B cell (primary cell): ENCODE measurements at regions of chr15 and their contacts with region 1.

Region 1: DNA sequence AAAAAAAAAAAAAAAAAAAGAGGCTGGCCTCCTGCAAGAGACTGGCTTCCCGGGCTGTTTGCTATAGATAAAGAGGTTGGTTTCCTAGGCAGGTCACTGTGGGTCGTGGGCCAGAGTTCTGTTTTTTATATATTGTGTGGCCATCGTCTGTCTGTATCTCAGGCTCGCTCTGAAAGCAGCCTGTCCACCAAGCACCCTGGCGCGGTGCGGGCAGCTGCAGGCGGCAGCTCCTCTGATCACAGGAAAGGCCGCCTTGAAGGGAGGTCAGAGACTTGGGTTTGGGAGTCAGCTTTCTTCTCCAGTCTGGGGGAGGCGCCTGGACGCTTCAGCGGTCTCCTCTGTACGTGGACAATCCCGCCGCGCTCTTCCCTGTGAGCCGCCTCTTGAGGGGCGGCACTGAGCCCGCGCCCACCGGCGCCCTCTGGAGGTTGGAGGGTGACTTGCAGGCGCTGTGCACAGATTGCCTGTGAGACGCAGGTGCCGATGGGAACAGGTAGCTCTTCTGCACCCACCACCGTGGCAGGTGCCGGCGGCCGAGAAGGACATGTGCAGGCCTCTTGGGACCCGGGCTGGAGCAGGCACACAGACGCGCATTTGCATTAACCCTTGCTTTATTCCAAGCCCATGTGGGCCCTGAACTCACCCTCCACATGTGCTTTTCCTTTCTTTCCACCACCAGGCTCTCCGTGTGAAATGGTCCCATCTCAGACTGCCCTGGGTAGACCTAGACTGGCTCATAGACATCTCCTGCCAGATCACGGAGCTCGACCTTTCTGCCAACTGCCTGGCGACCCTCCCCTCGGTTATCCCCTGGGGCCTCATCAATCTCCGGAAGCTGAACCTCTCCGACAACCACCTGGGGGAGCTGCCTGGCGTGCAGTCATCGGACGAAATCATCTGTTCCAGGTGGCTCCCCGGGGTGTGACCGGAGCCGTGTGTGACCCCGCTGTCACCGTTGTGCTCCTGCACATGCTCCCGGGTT is 89.3 kb downstream of the LRRK1 start:
- DNase-seq: peak; percentile 91
- ATAC-seq: peak; percentile 95
- H3K4me3 ChIP-seq: peak overlapping the region; percentile 16 to 78 (median 59)
- H3K4me3 Mint-ChIP-seq: peak overlapping the region; percentile 92
- H3K27ac ChIP-seq: no peak overlapping the region
- H3K27ac Mint-ChIP-seq: peak overlapping the region; percentile 42
- H3K4me1 ChIP-seq: peaks cover 10 to 20% of the 10 kb centered on the region in 2 donors
- H3K4me1 Mint-ChIP-seq: peaks cover 20% of the 10 kb centered on the region
- H3K27me3 ChIP-seq: no peaks in the 10 kb centered on the region
- H3K27me3 Mint-ChIP-seq: no peaks in the 10 kb centered on the region
- CTCF ChIP-seq: peak; percentile 96

Region 2: DNA sequence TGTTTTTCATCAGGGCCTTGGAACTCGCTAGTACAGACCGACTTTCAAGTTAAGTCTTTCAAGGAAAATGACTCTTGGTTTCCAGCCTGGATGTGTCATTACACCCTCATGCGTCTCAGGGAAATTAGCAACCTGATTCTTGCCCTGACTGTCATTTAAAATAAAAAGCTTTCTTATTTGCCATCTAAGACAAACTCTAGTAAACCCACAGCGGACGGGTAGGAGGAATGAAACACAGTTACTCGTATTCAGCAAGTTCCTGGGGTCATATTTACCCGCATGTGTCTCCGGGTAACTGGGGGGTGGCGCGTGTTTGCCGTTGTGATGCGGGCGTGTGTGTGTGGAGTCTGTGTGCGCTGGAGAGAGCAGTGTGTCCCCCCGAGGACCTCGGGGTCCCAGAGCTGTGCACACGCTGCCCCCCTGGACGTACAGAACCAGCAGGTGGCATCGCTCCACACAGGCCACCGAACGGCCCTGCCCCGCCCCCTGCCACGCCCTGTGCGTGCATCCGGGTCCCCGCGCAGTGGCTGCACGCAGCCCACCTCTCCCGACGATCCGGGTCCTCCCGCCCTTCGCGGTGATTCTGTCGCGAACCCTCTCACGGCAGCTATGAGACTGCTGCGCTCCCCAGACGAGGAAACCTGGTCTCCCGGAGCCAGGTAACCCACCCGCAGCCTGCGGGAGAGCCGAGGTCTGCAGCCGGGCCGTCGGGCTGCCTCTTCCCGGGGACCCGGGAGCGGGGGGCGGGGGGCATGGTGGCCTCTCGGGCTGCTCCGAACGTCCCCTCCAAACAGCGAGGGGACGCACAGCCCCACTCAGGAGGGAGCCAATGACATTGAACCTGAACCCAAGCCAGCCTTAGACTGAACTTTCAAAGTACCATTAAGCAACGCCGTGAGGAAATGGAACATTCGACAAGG is 158.9 kb before region 1 on chr15:
- CTCF ChIA-PET with region 1: interaction called, 4 read pairs
- POLR2A ChIA-PET with region 1: no interaction called
- intact Hi-C with region 1: loop called (anchors 1 kb)
- DNase-seq: peak; percentile 73
- ATAC-seq: peak; percentile 86
- H3K4me3 ChIP-seq: peak overlapping the region in 4 of 5 experiments; percentile 47 to 66 (median 58)
- H3K4me3 Mint-ChIP-seq: peak overlapping the region; percentile 87
- H3K27ac ChIP-seq: no peak overlapping the region
- H3K27ac Mint-ChIP-seq: peak overlapping the region; percentile 56
- H3K4me1 ChIP-seq: peaks cover 2 to 12% of the 10 kb centered on the region in 2 donors
- H3K4me1 Mint-ChIP-seq: peaks cover 8% of the 10 kb centered on the region
- H3K27me3 ChIP-seq: peaks cover 0 to 10% (median 1%) of the 10 kb centered on the region in 4 experiments
- H3K27me3 Mint-ChIP-seq: peaks cover 16% of the 10 kb centered on the region
- CTCF ChIP-seq: peak; percentile 31

Region 3: GRCh38 chr15:100929641-100930042 is 78.8 kb before region 1 on chr15:
- CTCF ChIA-PET with region 1: interaction called, 807 read pairs
- POLR2A ChIA-PET with region 1: no interaction called
- intact Hi-C with region 1: no loop called
- DNase-seq: no peak
- ATAC-seq: no peak
- H3K4me3 ChIP-seq: no peak overlapping the region
- H3K4me3 Mint-ChIP-seq: peak overlapping the region; percentile 55
- H3K27ac ChIP-seq: no peak overlapping the region
- H3K27ac Mint-ChIP-seq: peak overlapping the region; percentile 37
- H3K4me1 ChIP-seq: peaks cover 56 to 73% of the 10 kb centered on the region in 2 donors
- H3K4me1 Mint-ChIP-seq: peaks cover 74% of the 10 kb centered on the region
- H3K27me3 ChIP-seq: no peaks in the 10 kb centered on the region
- H3K27me3 Mint-ChIP-seq: no peaks in the 10 kb centered on the region
- CTCF ChIP-seq: no peak

Region 4: GRCh38 chr15:100947760-100948429 is 60.6 kb before region 1 on chr15:
- CTCF ChIA-PET with region 1: interaction called, 30 read pairs
- POLR2A ChIA-PET with region 1: no interaction called
- intact Hi-C with region 1: no loop called
- DNase-seq: no peak
- ATAC-seq: no peak
- H3K4me3 ChIP-seq: peak overlapping the region in 3 of 5 experiments; percentile 11 to 35 (median 33)
- H3K4me3 Mint-ChIP-seq: peak overlapping the region; percentile 77
- H3K27ac ChIP-seq: no peak overlapping the region
- H3K27ac Mint-ChIP-seq: peak overlapping the region; percentile 67
- H3K4me1 ChIP-seq: peaks cover 5 to 16% of the 10 kb centered on the region in 2 donors
- H3K4me1 Mint-ChIP-seq: peaks cover 49% of the 10 kb centered on the region
- H3K27me3 ChIP-seq: no peaks in the 10 kb centered on the region
- H3K27me3 Mint-ChIP-seq: no peaks in the 10 kb centered on the region
- CTCF ChIP-seq: no peak

Region 5: GRCh38 chr15:100981086-100981485 is 27.4 kb before region 1 on chr15:
- CTCF ChIA-PET with region 1: interaction called, 14 read pairs
- POLR2A ChIA-PET with region 1: no interaction called
- intact Hi-C with region 1: no loop called
- DNase-seq: peak; percentile 31
- ATAC-seq: peak; percentile 43
- H3K4me3 ChIP-seq: no peak overlapping the region
- H3K4me3 Mint-ChIP-seq: no peak overlapping the region
- H3K27ac ChIP-seq: no peak overlapping the region
- H3K27ac Mint-ChIP-seq: peak overlapping the region; percentile 43
- H3K4me1 ChIP-seq: peaks cover 0 to 7% of the 10 kb centered on the region in 2 donors
- H3K4me1 Mint-ChIP-seq: peaks cover 16% of the 10 kb centered on the region
- H3K27me3 ChIP-seq: no peaks in the 10 kb centered on the region
- H3K27me3 Mint-ChIP-seq: no peaks in the 10 kb centered on the region
- CTCF ChIP-seq: no peak

Region 6: GRCh38 chr15:101033801-101034200 is 25.4 kb after region 1 on chr15:
- CTCF ChIA-PET with region 1: interaction called, 17 read pairs
- POLR2A ChIA-PET with region 1: no interaction called
- intact Hi-C with region 1: no loop called
- DNase-seq: no peak
- ATAC-seq: no peak
- H3K4me3 ChIP-seq: no peak overlapping the region
- H3K4me3 Mint-ChIP-seq: no peak overlapping the region
- H3K27ac ChIP-seq: no peak overlapping the region
- H3K27ac Mint-ChIP-seq: no peak overlapping the region
- H3K4me1 ChIP-seq: peaks cover 4 to 21% of the 10 kb centered on the region in 2 donors
- H3K4me1 Mint-ChIP-seq: peaks cover 33% of the 10 kb centered on the region
- H3K27me3 ChIP-seq: no peaks in the 10 kb centered on the region
- H3K27me3 Mint-ChIP-seq: no peaks in the 10 kb centered on the region
- CTCF ChIP-seq: no peak

Region 7: DNA sequence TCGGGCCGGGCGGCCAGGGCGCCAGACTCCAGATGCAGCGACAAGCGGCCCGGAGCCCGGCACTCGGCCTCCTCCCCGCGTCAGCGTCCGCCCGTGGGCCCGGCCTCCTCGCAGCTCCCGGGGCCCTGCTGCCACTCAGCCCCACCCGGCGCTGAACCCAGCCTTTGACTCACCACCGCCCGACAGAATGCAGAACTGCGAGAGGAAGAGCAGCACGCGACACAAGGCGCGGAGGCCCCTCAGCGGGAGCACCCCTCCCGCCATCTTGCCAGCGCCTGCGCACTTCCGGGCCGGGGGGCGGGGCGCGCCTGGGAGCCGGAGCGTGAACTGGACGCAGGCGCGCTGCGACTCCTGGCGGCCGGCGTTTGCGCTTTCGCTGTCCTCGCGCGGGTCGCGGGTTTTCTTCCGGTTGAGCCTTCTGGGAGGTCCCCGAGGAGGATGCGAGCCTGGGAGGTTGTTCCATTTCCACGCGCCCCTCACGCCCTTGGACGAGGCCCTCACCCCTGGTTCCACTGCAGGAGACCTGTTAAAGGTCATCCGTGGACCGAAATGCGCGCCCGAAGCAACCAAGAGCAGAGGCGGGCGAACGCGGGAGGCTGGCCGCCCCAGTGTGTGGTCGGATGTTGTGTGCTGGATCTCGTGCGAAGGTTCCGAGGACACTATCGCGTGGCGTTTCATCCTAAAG is 643.8 kb after region 1 on chr15 and contains the start of gene TM2D3:
- CTCF ChIA-PET with region 1: no interaction called
- POLR2A ChIA-PET with region 1: no interaction called
- intact Hi-C with region 1: loop called (anchors 5 kb)
- DNase-seq: peak; percentile 97
- ATAC-seq: peak; percentile 89
- H3K4me3 ChIP-seq: peak within 1 kb of the TSS; percentile 79 to 94 (median 89)
- H3K4me3 Mint-ChIP-seq: peak within 1 kb of the TSS; percentile 93
- H3K27ac ChIP-seq: peak within 1 kb of the TSS; percentile 94 to 98
- H3K27ac Mint-ChIP-seq: peak within 1 kb of the TSS; percentile 98
- H3K4me1 ChIP-seq: peaks cover 21 to 23% of the 10 kb centered on the region in 2 donors
- H3K4me1 Mint-ChIP-seq: peaks cover 33% of the 10 kb centered on the region
- H3K27me3 ChIP-seq: no peaks in the 10 kb centered on the region
- H3K27me3 Mint-ChIP-seq: no peaks in the 10 kb centered on the region
- CTCF ChIP-seq: peak; percentile 76
- total RNA-seq, gene TM2D3: 56.4 and 63.5 TPM in 2 replicates